CD4-positive, alpha-beta T cell (primary cell): ENCODE measurements at regions of chr12 and their contacts with region 1.

Region 1: DNA sequence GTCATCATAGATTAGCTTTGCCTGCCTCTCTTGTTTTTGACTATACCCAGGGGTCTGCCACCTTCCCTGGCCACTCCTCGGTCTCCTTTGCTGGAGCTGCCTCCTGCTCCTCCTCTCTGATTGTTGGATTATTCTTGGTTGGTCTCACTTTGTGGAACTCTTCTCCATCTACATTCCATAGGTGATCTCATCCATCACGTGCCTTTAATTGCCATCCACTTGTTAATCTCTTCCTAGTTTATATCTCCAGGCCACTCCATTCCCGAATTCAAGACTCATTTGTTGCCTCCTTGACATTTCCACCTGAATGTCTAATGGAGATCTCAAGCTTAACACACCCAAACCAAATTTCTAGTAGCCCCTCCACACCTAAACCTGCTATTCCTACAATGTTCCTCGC is 5.4 kb downstream of the POLR3B start:
- DNase-seq: no peak
- ATAC-seq: no peak
- H3K4me3 ChIP-seq: no peak overlapping the region
- H3K4me3 Mint-ChIP-seq: no peak overlapping the region
- H3K27ac ChIP-seq: no peak overlapping the region
- H3K27ac Mint-ChIP-seq: no peak overlapping the region
- H3K4me1 ChIP-seq: peaks cover 11% of the 10 kb centered on the region
- H3K4me1 Mint-ChIP-seq: peaks cover 9% of the 10 kb centered on the region
- H3K27me3 ChIP-seq: no peaks in the 10 kb centered on the region
- H3K27me3 Mint-ChIP-seq: no peaks in the 10 kb centered on the region
- CTCF ChIP-seq: no peak

Region 2: GRCh38 chr12:106380954-106381353 is 18.0 kb after region 1 on chr12:
- CTCF ChIA-PET with region 1: no interaction called
- POLR2A ChIA-PET with region 1: interaction called, 9 read pairs
- intact Hi-C with region 1: loop called in 1 of 2 experiments (anchors 2 kb)
- DNase-seq: no peak
- ATAC-seq: no peak
- H3K4me3 ChIP-seq: no peak overlapping the region
- H3K4me3 Mint-ChIP-seq: no peak overlapping the region
- H3K27ac ChIP-seq: no peak overlapping the region
- H3K27ac Mint-ChIP-seq: no peak overlapping the region
- H3K4me1 ChIP-seq: peaks cover 1% of the 10 kb centered on the region
- H3K4me1 Mint-ChIP-seq: peaks cover 14% of the 10 kb centered on the region
- H3K27me3 ChIP-seq: no peaks in the 10 kb centered on the region
- H3K27me3 Mint-ChIP-seq: no peaks in the 10 kb centered on the region
- CTCF ChIP-seq: no peak

Region 3: DNA sequence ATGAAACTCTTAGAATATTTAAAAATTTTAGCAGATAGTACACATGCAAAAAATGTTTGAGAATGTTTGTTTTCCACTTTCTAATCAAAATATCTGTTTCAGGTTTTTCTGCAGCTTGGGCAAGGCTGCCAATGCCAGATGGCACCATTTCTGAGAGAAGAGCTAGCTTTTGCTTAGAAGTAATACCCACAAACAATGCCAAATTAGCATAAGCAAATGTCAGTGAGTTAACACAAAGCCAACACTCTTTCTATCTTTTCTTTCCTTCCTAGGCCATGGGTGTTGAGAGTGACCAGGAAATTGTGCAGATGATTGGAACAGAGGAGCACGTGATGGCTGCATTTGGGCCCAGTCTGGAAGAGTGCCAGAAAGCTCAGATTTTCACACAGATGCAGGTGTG is 29.8 kb after region 1 on chr12:
- CTCF ChIA-PET with region 1: no interaction called
- POLR2A ChIA-PET with region 1: no interaction called
- intact Hi-C with region 1: no loop called
- DNase-seq: no peak
- ATAC-seq: no peak
- H3K4me3 ChIP-seq: no peak overlapping the region
- H3K4me3 Mint-ChIP-seq: no peak overlapping the region
- H3K27ac ChIP-seq: no peak overlapping the region
- H3K27ac Mint-ChIP-seq: no peak overlapping the region
- H3K4me1 ChIP-seq: no peaks in the 10 kb centered on the region
- H3K4me1 Mint-ChIP-seq: no peaks in the 10 kb centered on the region
- H3K27me3 ChIP-seq: no peaks in the 10 kb centered on the region
- H3K27me3 Mint-ChIP-seq: no peaks in the 10 kb centered on the region
- CTCF ChIP-seq: no peak